H1 (cell line): ENCODE measurements at regions of chr3 and their contacts with region 1.

Region 1: GRCh38 chr3:159322322-159322939 is 520.6 kb downstream of the MFSD1 start:
- DNase-seq: peak; percentile 23 to 92
- H3K4me3 ChIP-seq: no peak overlapping the region
- H3K27ac ChIP-seq: no peak overlapping the region
- H3K4me1 ChIP-seq: no peaks in the 10 kb centered on the region
- H3K27me3 ChIP-seq: no peaks in the 10 kb centered on the region
- CTCF ChIP-seq: peak; percentile 85 to 94 (median 92)
- EP300 ChIP-seq: no peak
- POLR2A ChIP-seq: no peak
- RAD21 ChIP-seq: peak; percentile 77 to 81

Region 2: DNA sequence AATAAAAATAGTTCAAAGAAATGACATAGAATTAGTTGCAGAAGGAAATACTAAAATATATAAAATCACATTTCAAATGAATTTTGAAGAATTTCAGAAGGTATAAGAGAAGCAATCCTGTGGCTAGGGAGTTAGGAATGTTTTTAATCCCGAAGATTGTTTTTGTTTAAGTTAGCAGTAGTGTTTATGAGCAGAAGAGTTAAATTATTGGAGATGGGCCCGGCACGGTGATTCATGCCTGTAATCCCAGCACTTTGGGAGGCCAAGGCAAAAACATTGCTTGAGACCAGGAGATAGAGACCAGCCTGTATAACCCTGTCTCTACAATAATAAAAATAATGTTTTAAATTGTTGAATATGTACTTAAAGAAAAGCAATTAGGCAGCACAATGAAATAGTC is 88.1 kb before region 1 on chr3:
- CTCF ChIA-PET with region 1: no interaction called
- POLR2A ChIA-PET with region 1: no interaction called
- DNase-seq: no peak
- H3K4me3 ChIP-seq: no peak overlapping the region
- H3K27ac ChIP-seq: no peak overlapping the region
- H3K4me1 ChIP-seq: 0 out of 7 replicates have a peak, but pooled peaks cover 0 to 5% (median 0%) of the 10 kb centered on the region in 4 experiments
- H3K27me3 ChIP-seq: no peaks in the 10 kb centered on the region
- CTCF ChIP-seq: no peak
- EP300 ChIP-seq: no peak
- POLR2A ChIP-seq: no peak
- RAD21 ChIP-seq: no peak

Region 3: DNA sequence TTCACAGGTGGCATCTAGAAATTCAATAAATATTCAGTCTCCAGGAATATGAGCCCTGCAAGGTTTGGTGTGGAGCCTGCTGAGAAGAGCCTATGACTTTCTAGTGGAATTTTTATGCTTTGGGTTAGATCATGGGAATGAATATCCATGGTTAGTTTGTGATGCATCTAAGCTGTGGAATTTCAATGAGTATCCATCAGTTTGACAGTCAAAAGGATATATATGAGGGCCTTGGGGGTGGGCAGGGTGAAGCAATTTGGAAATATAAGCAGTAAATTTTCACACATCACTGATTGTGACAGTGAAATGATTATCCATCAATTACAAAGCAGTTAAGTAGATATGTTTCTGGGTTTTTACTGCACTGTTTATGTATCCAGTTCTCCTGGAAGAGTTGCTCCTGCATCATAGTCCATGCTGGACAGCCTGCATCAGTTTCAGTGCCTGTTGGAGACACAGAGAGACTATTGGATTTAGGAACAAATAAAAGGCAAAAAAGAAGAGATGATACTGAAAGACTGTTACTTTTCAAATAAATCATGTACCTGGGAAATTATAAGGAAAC is 10.2 kb after region 1 on chr3:
- CTCF ChIA-PET with region 1: interaction called, 20 read pairs
- POLR2A ChIA-PET with region 1: no interaction called
- DNase-seq: no peak
- H3K4me3 ChIP-seq: no peak overlapping the region
- H3K27ac ChIP-seq: no peak overlapping the region
- H3K4me1 ChIP-seq: no peaks in the 10 kb centered on the region
- H3K27me3 ChIP-seq: no peaks in the 10 kb centered on the region
- CTCF ChIP-seq: no peak
- EP300 ChIP-seq: no peak
- POLR2A ChIP-seq: no peak
- RAD21 ChIP-seq: no peak

Region 4: DNA sequence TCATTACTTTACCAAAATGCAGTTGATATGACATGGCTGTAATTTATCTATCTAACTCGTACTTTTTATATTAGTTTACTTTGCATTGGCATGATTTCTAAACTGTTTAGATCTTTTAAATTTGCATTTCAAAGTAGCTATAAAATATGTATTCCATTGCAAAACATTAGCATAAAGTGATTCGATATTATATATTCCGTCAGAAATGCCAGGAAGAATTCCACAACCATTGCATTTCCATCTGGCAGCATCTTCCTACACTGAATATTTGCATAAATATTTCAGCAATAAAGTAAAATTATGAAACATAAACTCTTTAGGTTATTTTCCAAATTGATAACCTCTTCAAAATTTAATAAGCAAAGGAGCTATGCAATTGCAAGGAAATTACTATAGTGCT is 26.0 kb after region 1 on chr3:
- CTCF ChIA-PET with region 1: interaction called, 10 read pairs
- POLR2A ChIA-PET with region 1: no interaction called
- DNase-seq: no peak
- H3K4me3 ChIP-seq: no peak overlapping the region
- H3K27ac ChIP-seq: no peak overlapping the region
- H3K4me1 ChIP-seq: no peaks in the 10 kb centered on the region
- H3K27me3 ChIP-seq: peaks cover 0 to 1% (median 0%) of the 10 kb centered on the region in 4 experiments; a peak in 1 of 7 replicates
- CTCF ChIP-seq: no peak
- EP300 ChIP-seq: no peak
- POLR2A ChIP-seq: no peak
- RAD21 ChIP-seq: no peak

Region 5: GRCh38 chr3:159586571-159587202 is 264.3 kb after region 1 on chr3:
- CTCF ChIA-PET with region 1: interaction called, 13 read pairs
- POLR2A ChIA-PET with region 1: no interaction called
- DNase-seq: peak; percentile 41 to 68
- H3K4me3 ChIP-seq: no peak overlapping the region
- H3K27ac ChIP-seq: no peak overlapping the region
- H3K4me1 ChIP-seq: peaks cover 0 to 6% (median 3%) of the 10 kb centered on the region in 4 experiments; a peak in 3 of 7 replicates
- H3K27me3 ChIP-seq: no peaks in the 10 kb centered on the region
- CTCF ChIP-seq: peak; percentile 71 to 84 (median 81)
- EP300 ChIP-seq: no peak
- POLR2A ChIP-seq: no peak
- RAD21 ChIP-seq: peak; percentile 84